ENCODE measurements at regions of chr14 and their contacts with region 1.

Region 1: GRCh38 chr14:77654001-77654441 is 37.6 kb upstream of the SPTLC2 start:
- DNase-seq: no peak
- ATAC-seq: no peak
- H3K4me3 ChIP-seq: no peak overlapping the region
- H3K27ac ChIP-seq: peak overlapping the region in 1 of 10 donors; percentile 1
- H3K4me1 ChIP-seq: peaks cover 0 to 27% (median 3%) of the 10 kb centered on the region in 9 donors
- H3K27me3 ChIP-seq: no peaks in the 10 kb centered on the region
- CTCF ChIP-seq: no peak

Region 2: GRCh38 chr14:77580964-77581505 is 73.0 kb before region 1 on chr14:
- intact Hi-C with region 1: no loop called
- DNase-seq: no peak
- ATAC-seq: peak in 4 of 8 donors; percentile 41 to 68 (median 48)
- H3K4me3 ChIP-seq: peak overlapping the region in 7 of 10 donors; percentile 13 to 27 (median 13)
- H3K27ac ChIP-seq: peak overlapping the region in 7 of 10 donors; percentile 12 to 76 (median 56)
- H3K4me1 ChIP-seq: peaks cover 5 to 86% (median 46%) of the 10 kb centered on the region in 9 donors
- H3K27me3 ChIP-seq: no peaks in the 10 kb centered on the region
- CTCF ChIP-seq: no peak

Region 3: GRCh38 chr14:78278464-78279250 is 624.6 kb after region 1 on chr14:
- intact Hi-C with region 1: no loop called
- DNase-seq: no peak
- ATAC-seq: no peak
- H3K4me3 ChIP-seq: no peak overlapping the region
- H3K27ac ChIP-seq: no peak overlapping the region
- H3K4me1 ChIP-seq: no peaks in the 10 kb centered on the region
- H3K27me3 ChIP-seq: peaks cover 0 to 9% (median 0%) of the 10 kb centered on the region in 7 donors
- CTCF ChIP-seq: no peak

Region 4: DNA sequence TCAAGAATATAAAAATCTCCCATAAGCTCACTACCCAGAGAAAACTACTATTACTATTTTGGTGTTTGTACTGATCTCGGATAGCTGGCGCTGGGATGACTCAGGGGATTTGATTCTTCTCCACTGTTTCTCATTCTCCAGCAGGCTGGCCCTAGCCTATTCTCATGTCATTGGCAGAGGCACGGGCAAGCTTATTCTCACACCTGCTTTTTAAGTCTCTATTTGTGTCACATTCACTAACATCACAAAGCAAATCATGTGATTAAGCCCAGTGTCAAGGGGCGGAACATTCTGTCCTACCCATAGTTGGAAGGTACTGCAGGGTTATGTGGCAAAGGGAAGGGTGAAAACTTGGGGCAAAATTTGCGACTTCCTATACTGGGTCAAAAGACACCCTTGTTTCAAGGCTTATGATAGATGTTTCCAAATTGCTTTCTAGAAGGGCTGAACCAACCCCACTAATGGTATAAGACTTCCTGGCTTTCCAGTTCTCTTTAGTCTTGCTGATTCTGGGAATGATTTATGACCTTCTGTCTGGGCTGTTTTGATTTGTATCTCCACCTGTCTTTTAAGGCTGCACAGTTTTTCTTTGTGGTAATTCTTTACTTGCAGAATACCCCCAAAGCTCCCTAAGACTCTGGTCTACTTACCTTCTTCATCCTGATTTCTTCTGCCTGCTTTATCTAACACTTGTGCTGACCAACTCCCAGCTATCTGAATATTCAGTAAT is 922.6 kb after region 1 on chr14:
- intact Hi-C with region 1: loop called in 1 of 10 experiments (anchors 10 kb)
- DNase-seq: no peak
- ATAC-seq: no peak
- H3K4me3 ChIP-seq: no peak overlapping the region
- H3K27ac ChIP-seq: no peak overlapping the region
- H3K4me1 ChIP-seq: no peaks in the 10 kb centered on the region
- H3K27me3 ChIP-seq: peaks cover 0 to 4% (median 0%) of the 10 kb centered on the region in 7 donors
- CTCF ChIP-seq: no peak